Natural killer cell (primary cell): ENCODE measurements at regions of chr22 and their contacts with region 1.

Region 1: DNA sequence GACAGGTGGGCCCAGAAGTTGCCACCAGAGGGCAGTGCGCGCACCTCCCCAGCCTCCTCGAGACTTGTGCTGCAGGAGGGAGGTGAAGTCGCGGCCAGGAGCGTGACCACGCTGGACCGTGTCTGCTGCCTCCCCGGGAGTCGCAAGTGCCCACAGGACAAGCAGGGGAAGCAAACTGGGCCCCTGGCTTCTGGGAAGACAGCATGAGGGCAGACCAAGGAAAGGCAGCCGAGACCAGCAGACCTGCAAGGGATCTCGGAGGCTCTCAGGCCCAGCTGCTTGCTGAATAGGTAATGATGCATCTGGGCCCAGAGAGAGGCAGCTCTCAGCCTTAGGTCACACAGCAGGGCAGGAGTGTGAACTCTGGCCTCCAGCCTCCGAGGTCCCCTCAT is 17.0 kb upstream of the IL2RB start:
- DNase-seq: peak; percentile 80 to 92
- ATAC-seq: peak in 2 of 3 donors; percentile 11 to 44
- H3K4me3 ChIP-seq: peak overlapping the region; percentile 23
- H3K4me3 Mint-ChIP-seq: peak overlapping the region; percentile 95
- H3K27ac ChIP-seq: peak overlapping the region; percentile 68
- H3K27ac Mint-ChIP-seq: peak overlapping the region; percentile 94 to 97
- H3K4me1 ChIP-seq: peaks cover 89% of the 10 kb centered on the region
- H3K4me1 Mint-ChIP-seq: peaks cover 78 to 87% of the 10 kb centered on the region in 2 donors
- H3K27me3 ChIP-seq: no peaks in the 10 kb centered on the region
- H3K27me3 Mint-ChIP-seq: no peaks in the 10 kb centered on the region
- CTCF ChIP-seq: peak; percentile 85

Region 2: GRCh38 chr22:37077884-37078485 is 88.7 kb before region 1 on chr22:
- intact Hi-C with region 1: loop called (anchors 1 kb)
- DNase-seq: peak; percentile 85 to 90
- ATAC-seq: peak; percentile 18 to 42 (median 33)
- H3K4me3 ChIP-seq: no peak overlapping the region
- H3K4me3 Mint-ChIP-seq: peak overlapping the region; percentile 61
- H3K27ac ChIP-seq: no peak overlapping the region
- H3K27ac Mint-ChIP-seq: peak overlapping the region; percentile 97 to 99
- H3K4me1 ChIP-seq: peaks cover 33% of the 10 kb centered on the region
- H3K4me1 Mint-ChIP-seq: peaks cover 30 to 31% of the 10 kb centered on the region in 2 donors
- H3K27me3 ChIP-seq: no peaks in the 10 kb centered on the region
- H3K27me3 Mint-ChIP-seq: peaks cover 0 to 6% of the 10 kb centered on the region in 2 donors
- CTCF ChIP-seq: peak; percentile 100

Region 3: DNA sequence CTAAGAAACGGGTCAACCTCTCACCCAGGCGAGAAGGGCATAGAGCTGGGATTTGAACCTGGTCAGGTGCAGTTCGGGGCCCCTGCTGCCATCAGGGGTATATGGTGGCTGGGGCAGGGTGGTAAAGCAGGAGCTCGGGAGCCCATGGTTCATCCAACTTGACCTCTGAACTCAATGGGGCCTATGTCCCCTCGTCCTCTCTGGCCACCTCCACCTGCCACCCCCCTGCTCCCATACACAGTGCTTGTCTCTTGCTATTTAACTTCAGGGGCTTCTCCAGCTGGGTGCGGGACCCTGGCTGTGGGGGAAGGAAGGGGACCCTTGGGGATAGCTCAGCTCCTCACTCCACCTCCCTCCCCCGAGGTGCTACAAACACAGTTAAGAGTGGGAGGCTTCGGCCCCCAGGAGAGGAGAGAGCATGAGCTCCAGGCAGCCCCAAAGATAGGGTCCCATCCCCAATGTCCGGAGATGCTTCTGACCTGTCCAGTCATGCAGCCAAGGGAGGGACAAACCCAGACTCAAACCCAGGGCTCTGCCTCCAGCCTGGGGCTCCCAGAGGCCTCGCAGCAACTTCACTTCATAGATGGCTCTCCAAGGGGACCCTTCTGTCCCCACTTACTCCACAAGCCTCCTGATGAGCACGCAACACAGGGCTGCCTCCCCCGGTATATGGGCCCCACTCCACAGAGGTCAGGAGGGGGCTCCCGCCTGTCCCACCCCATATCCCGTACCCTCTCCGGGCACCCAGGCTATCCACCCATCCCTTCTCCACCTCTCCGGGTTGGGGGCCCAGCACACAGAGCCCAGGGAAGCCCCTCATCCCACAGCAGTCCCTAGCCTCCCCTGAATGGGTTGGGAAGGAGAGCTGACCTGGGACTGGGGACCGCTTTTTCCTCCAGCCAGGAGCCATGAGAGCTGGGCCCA is 17.7 kb before region 1 on chr22:
- intact Hi-C with region 1: loop called (anchors 1 kb)
- DNase-seq: peak in 1 of 2 donors; percentile 32
- ATAC-seq: no peak
- H3K4me3 ChIP-seq: peak overlapping the region; percentile 92
- H3K4me3 Mint-ChIP-seq: peak overlapping the region; percentile 99
- H3K27ac ChIP-seq: peak overlapping the region; percentile 82
- H3K27ac Mint-ChIP-seq: peak overlapping the region; percentile 95 to 99
- H3K4me1 ChIP-seq: peaks cover 61% of the 10 kb centered on the region
- H3K4me1 Mint-ChIP-seq: peaks cover 71 to 85% of the 10 kb centered on the region in 2 donors
- H3K27me3 ChIP-seq: no peaks in the 10 kb centered on the region
- H3K27me3 Mint-ChIP-seq: no peaks in the 10 kb centered on the region
- CTCF ChIP-seq: no peak

Region 4: GRCh38 chr22:37229805-37230672 is 63.4 kb after region 1 on chr22:
- intact Hi-C with region 1: loop called (anchors 1 kb)
- DNase-seq: peak; percentile 85 to 96
- ATAC-seq: peak; percentile 78 to 93 (median 93)
- H3K4me3 ChIP-seq: peak overlapping the region; percentile 11
- H3K4me3 Mint-ChIP-seq: peak overlapping the region; percentile 81
- H3K27ac ChIP-seq: peak overlapping the region; percentile 97
- H3K27ac Mint-ChIP-seq: peak overlapping the region; percentile 93 to 98
- H3K4me1 ChIP-seq: peaks cover 94% of the 10 kb centered on the region
- H3K4me1 Mint-ChIP-seq: peaks cover 82 to 90% of the 10 kb centered on the region in 2 donors
- H3K27me3 ChIP-seq: no peaks in the 10 kb centered on the region
- H3K27me3 Mint-ChIP-seq: no peaks in the 10 kb centered on the region
- CTCF ChIP-seq: no peak

Region 5: GRCh38 chr22:37290737-37291136 is 124.1 kb after region 1 on chr22:
- intact Hi-C with region 1: no loop called
- DNase-seq: no peak
- ATAC-seq: no peak
- H3K4me3 ChIP-seq: no peak overlapping the region
- H3K4me3 Mint-ChIP-seq: no peak overlapping the region
- H3K27ac ChIP-seq: no peak overlapping the region
- H3K27ac Mint-ChIP-seq: peak overlapping the region; percentile 91 to 95
- H3K4me1 ChIP-seq: peaks cover 71% of the 10 kb centered on the region
- H3K4me1 Mint-ChIP-seq: peaks cover 63 to 88% of the 10 kb centered on the region in 2 donors
- H3K27me3 ChIP-seq: no peaks in the 10 kb centered on the region
- H3K27me3 Mint-ChIP-seq: no peaks in the 10 kb centered on the region
- CTCF ChIP-seq: no peak

Region 6: DNA sequence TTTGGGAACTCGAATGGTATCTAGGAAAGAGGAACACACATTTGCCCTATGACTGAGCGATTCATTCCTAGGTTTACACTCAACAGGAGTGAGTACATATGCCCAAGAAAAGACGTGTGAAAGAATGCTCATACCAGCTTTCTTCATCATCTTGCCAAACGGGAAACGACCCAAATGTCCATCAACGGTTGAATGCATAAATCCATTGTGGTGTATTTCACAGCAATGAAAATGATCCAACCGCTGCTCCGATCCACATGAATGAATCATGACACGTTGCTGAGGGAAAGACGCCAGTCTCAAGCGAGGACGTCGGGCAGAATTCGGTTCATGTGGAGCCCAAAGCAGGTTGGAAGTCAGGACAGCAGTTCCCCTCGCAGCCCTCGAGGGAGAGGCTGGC is 187.2 kb after region 1 on chr22:
- intact Hi-C with region 1: no loop called
- DNase-seq: no peak
- ATAC-seq: no peak
- H3K4me3 ChIP-seq: no peak overlapping the region
- H3K4me3 Mint-ChIP-seq: no peak overlapping the region
- H3K27ac ChIP-seq: no peak overlapping the region
- H3K27ac Mint-ChIP-seq: no peak overlapping the region
- H3K4me1 ChIP-seq: no peaks in the 10 kb centered on the region
- H3K4me1 Mint-ChIP-seq: peaks cover 0 to 6% of the 10 kb centered on the region in 2 donors
- H3K27me3 ChIP-seq: no peaks in the 10 kb centered on the region
- H3K27me3 Mint-ChIP-seq: no peaks in the 10 kb centered on the region
- CTCF ChIP-seq: no peak

Region 7: GRCh38 chr22:37383341-37383740 is 216.7 kb after region 1 on chr22:
- intact Hi-C with region 1: no loop called
- DNase-seq: no peak
- ATAC-seq: no peak
- H3K4me3 ChIP-seq: no peak overlapping the region
- H3K4me3 Mint-ChIP-seq: no peak overlapping the region
- H3K27ac ChIP-seq: no peak overlapping the region
- H3K27ac Mint-ChIP-seq: no peak overlapping the region
- H3K4me1 ChIP-seq: no peaks in the 10 kb centered on the region
- H3K4me1 Mint-ChIP-seq: peaks cover 0 to 15% of the 10 kb centered on the region in 2 donors
- H3K27me3 ChIP-seq: no peaks in the 10 kb centered on the region
- H3K27me3 Mint-ChIP-seq: peaks cover 5 to 19% of the 10 kb centered on the region in 2 donors
- CTCF ChIP-seq: no peak

Region 8: DNA sequence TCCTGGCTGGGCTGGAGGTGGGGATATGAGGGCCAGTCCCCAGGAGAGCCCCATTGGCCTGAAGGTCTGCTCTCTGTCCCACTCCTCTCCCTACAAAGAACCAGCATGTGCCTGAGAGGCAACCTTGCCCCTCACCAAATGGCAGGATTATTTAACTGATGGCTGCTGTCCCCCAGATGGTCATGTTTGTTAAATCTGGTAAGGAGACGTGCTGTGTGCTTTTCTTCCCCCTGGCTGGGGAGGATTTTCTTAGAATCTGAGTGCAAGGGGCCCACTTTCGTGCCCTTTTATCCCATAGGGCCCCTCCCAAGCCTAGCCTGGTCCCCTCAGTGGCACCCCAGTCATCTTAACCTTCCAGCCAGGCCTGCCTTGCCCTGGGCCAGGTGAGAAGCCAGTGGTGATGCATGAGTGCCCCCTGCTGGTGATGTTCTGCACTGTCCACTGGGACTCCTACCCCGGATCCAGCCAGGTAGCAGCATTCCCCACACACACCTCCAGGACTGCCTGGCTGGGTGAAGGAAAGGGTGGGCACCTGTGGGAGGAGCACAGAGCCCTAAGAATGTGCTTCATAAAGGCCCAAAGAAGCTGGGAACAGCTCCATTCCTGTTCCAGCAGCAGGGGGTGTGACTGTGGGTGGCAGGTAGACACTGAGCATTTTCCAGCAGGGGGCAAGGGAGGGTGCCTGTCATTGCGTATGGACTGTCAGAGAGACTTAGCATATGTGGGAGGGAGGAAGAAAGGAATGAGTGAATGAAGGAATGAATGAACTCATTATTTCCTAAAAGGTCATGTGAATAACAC is 290.6 kb after region 1 on chr22:
- intact Hi-C with region 1: loop called (anchors 2 kb)
- DNase-seq: peak; percentile 79 to 89
- ATAC-seq: peak; percentile 86 to 99 (median 96)
- H3K4me3 ChIP-seq: no peak overlapping the region
- H3K4me3 Mint-ChIP-seq: no peak overlapping the region
- H3K27ac ChIP-seq: no peak overlapping the region
- H3K27ac Mint-ChIP-seq: no peak overlapping the region
- H3K4me1 ChIP-seq: no peaks in the 10 kb centered on the region
- H3K4me1 Mint-ChIP-seq: peaks cover 5 to 21% of the 10 kb centered on the region in 2 donors
- H3K27me3 ChIP-seq: no peaks in the 10 kb centered on the region
- H3K27me3 Mint-ChIP-seq: no peaks in the 10 kb centered on the region
- CTCF ChIP-seq: peak; percentile 96